Activated CD4-positive, alpha-beta T cell treated with anti-CD3 and anti-CD28 coated beads for 36 hours (primary cell): ENCODE measurements at regions of chr4 and their contacts with region 1.

Region 1: GRCh38 chr4:38179690-38180377 is 219.6 kb downstream of the PTTG2 start:
- DNase-seq: peak; percentile 84
- ATAC-seq: peak; percentile 55
- H3K4me3 Mint-ChIP-seq: no peak overlapping the region
- H3K27ac Mint-ChIP-seq: no peak overlapping the region
- H3K4me1 Mint-ChIP-seq: peaks cover 37% of the 10 kb centered on the region
- H3K27me3 Mint-ChIP-seq: peaks cover 2% of the 10 kb centered on the region

Region 2: DNA sequence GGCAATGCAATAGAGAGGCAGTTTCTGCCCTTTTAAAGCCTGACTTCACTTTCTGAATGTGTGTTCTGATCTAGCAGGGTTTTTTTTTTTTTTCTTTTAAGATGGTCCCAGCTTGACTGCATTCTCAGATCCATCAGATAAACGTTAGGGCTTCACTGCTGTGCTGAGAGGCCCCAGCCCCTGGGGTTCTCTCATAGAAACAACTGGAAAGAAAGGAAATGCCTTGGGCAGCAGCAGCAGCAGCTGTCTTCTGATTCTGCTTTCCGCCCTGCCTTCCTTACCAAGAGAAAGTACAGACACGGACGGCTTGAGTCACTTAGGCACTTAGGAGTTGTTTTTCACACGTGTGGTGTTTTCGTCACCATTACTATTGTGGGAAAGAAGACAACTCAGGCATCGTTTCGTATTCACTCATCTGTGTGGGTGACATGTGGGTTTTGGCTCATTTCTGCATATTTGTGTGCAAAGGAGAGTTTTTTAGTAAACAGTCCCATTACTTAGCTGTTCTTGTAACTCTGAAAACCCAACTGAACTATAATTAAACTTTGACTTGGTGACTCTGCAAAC is 47.6 kb before region 1 on chr4:
- CTCF ChIA-PET with region 1: interaction called, 15 read pairs
- POLR2A ChIA-PET with region 1: no interaction called
- intact Hi-C with region 1: loop called (anchors 1 to 5 kb)
- DNase-seq: peak; percentile 84
- ATAC-seq: peak; percentile 62
- H3K4me3 Mint-ChIP-seq: peak overlapping the region; percentile 57
- H3K27ac Mint-ChIP-seq: peak overlapping the region; percentile 96
- H3K4me1 Mint-ChIP-seq: peaks cover 74% of the 10 kb centered on the region
- H3K27me3 Mint-ChIP-seq: peaks cover 3% of the 10 kb centered on the region

Region 3: DNA sequence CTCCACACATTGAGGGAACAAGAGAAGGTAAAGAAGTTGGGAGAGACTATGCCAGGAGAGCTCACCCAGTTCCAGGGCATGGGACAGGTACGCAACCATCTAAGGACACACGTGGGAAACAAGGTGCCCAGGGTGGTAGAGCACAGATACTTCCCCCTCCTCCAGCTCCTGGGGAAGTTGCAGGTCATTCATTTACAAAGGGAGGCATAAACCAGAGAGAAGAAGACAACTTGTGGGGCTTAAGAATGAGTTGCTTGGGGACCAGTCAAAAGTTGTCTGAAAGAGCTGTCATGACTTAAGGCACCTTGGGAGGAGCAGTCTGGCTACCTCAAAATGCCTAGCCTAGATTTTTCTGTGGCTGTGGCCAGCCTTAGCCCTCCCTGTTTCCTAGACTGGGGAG is 33.5 kb before region 1 on chr4:
- CTCF ChIA-PET with region 1: no interaction called
- POLR2A ChIA-PET with region 1: no interaction called
- intact Hi-C with region 1: no loop called
- DNase-seq: no peak
- ATAC-seq: no peak
- H3K4me3 Mint-ChIP-seq: no peak overlapping the region
- H3K27ac Mint-ChIP-seq: no peak overlapping the region
- H3K4me1 Mint-ChIP-seq: peaks cover 3% of the 10 kb centered on the region
- H3K27me3 Mint-ChIP-seq: no peaks in the 10 kb centered on the region

Region 4: DNA sequence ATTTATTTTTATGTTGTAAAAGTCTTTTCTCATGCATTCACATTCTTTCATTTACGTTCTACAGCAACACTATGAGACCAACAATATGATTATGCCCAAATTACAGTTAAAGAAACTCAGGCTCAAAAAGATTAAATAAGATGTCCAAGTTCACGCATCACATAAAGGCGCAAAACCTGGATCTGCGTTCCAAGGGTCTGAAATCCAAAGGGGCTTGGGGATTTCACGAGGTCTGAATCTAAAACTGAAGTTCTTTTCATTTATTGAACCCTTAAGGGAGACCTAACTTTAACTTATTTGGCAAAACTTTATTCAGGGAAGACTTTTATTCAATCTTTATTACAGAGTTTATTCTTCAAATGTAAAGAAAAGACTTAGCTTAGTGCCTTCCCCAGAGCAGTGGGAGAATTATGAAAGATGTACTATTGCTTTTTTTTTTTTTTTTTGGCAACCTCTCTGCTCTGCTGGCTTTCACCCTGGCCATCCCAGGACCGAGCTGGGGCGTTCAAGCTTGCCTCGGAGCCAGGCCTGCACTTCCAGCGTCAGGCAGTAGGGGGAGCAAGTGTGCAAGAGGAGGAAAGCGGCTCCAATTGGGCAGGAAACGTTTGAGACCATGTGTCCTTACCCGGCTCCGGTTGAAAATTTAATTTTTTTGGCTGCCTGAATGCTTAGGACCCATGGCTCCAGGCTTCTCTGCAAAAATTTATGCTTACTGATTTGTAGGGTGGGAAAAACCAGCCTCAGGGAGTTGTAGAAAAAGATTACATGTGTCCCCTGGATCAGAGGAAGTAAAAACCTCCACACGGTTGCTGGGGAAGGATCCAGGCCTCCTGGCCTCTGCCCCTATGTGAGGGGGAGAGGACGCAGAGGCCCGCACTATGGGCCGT is 139.9 kb after region 1 on chr4:
- CTCF ChIA-PET with region 1: interaction called, 41 read pairs
- POLR2A ChIA-PET with region 1: no interaction called
- intact Hi-C with region 1: loop called (anchors 1 to 2 kb)
- DNase-seq: peak; percentile 96
- ATAC-seq: peak; percentile 84
- H3K4me3 Mint-ChIP-seq: peak overlapping the region; percentile 68
- H3K27ac Mint-ChIP-seq: peak overlapping the region; percentile 78
- H3K4me1 Mint-ChIP-seq: peaks cover 50% of the 10 kb centered on the region
- H3K27me3 Mint-ChIP-seq: peaks cover 7% of the 10 kb centered on the region

Region 5: DNA sequence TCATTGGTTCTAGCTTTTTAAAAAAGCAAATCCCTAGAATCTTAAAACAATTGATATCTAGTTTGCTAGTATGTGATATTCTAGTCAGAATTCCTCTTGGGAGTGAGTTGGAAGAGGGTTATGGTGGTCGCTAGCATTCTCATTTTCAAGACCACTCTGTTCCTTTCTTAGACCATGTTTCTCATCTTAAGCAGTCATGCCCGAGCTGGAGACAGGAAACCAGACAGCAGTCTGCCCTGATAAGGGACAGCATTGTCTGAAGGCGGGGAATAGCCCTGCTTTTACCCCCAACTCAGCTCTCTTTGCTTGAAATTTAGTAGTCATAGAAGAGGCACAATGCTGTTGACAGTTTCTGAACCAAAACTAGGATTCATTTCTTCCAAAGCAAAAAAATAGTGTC is 489.4 kb after region 1 on chr4:
- CTCF ChIA-PET with region 1: interaction called, 112 read pairs
- POLR2A ChIA-PET with region 1: no interaction called
- intact Hi-C with region 1: no loop called
- DNase-seq: no peak
- ATAC-seq: no peak
- H3K4me3 Mint-ChIP-seq: peak overlapping the region; percentile 10
- H3K27ac Mint-ChIP-seq: peak overlapping the region; percentile 59
- H3K4me1 Mint-ChIP-seq: peaks cover 86% of the 10 kb centered on the region
- H3K27me3 Mint-ChIP-seq: no peaks in the 10 kb centered on the region

Region 6: GRCh38 chr4:38730830-38731646 is 551.2 kb after region 1 on chr4:
- CTCF ChIA-PET with region 1: interaction called, 66 read pairs
- POLR2A ChIA-PET with region 1: no interaction called
- intact Hi-C with region 1: loop called (anchors 1 kb)
- DNase-seq: peak; percentile 91
- ATAC-seq: peak; percentile 80
- H3K4me3 Mint-ChIP-seq: no peak overlapping the region
- H3K27ac Mint-ChIP-seq: no peak overlapping the region
- H3K4me1 Mint-ChIP-seq: peaks cover 15% of the 10 kb centered on the region
- H3K27me3 Mint-ChIP-seq: no peaks in the 10 kb centered on the region

Region 7: GRCh38 chr4:38856524-38857337 is 676.9 kb after region 1 on chr4 and contains the start of gene TLR6:
- CTCF ChIA-PET with region 1: interaction called, 4 read pairs
- POLR2A ChIA-PET with region 1: no interaction called
- intact Hi-C with region 1: loop called in 1 of 2 experiments (anchors 5 kb)
- DNase-seq: peak; percentile 79
- ATAC-seq: peak; percentile 38
- H3K4me3 Mint-ChIP-seq: peak within 1 kb of the TSS; percentile 74
- H3K27ac Mint-ChIP-seq: peak within 1 kb of the TSS; percentile 90
- H3K4me1 Mint-ChIP-seq: peaks cover 32% of the 10 kb centered on the region
- H3K27me3 Mint-ChIP-seq: no peaks in the 10 kb centered on the region
- total RNA-seq, gene TLR6: 1.5 to 1.8 TPM